ENCODE measurements at regions of chr6 and their contacts with region 1.

Region 1: DNA sequence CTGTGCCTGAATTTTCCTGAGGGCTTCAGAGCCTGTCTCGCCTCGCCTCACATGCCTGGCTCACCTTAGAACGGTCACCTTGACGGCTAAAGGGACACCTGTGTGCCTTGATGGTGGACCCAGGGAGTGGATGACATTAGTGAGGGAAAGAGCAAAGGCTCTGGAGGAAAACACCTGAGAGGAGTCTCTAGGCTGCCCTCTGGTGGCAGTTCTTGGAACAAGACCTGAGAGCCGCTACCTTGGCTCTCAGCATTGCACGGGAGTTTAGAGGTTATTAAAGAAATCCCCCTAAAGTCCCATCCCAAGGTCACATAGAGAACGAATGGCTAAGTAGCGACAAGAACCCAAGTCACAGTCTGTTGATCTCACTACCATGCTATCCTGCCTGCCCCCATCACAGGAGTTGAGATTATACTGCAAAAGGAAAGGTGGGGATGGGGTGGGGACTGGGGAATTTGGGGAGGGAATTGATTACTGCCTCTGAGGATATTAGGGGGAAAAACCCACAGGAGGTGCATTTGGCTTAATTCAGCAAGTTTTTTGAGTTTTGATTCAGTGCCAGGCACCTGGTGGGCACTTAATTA is 7.9 kb upstream of the CDSN start:
- DNase-seq: peak; percentile 88
- ATAC-seq: peak; percentile 75
- H3K4me3 Mint-ChIP-seq: no peak overlapping the region
- H3K27ac Mint-ChIP-seq: peak overlapping the region; percentile 2; the same call in 1 of the 2 replicates
- H3K4me1 Mint-ChIP-seq: peaks cover 42% of the 10 kb centered on the region
- H3K27me3 Mint-ChIP-seq: peaks cover 10% of the 10 kb centered on the region
- CTCF ChIP-seq: peak; percentile 90

Region 2: GRCh38 chr6:31103136-31103535 is 25.0 kb before region 1 on chr6:
- CTCF ChIA-PET with region 1: interaction called, 12 read pairs
- POLR2A ChIA-PET with region 1: no interaction called
- DNase-seq: no peak
- ATAC-seq: no peak
- H3K4me3 Mint-ChIP-seq: no peak overlapping the region
- H3K27ac Mint-ChIP-seq: no peak overlapping the region
- H3K4me1 Mint-ChIP-seq: 0 out of 2 replicates have a peak, but pooled peaks cover 3% of the 10 kb centered on the region
- H3K27me3 Mint-ChIP-seq: no peaks in the 10 kb centered on the region; the same call in 1 of the 2 replicates
- CTCF ChIP-seq: no peak

Region 3: DNA sequence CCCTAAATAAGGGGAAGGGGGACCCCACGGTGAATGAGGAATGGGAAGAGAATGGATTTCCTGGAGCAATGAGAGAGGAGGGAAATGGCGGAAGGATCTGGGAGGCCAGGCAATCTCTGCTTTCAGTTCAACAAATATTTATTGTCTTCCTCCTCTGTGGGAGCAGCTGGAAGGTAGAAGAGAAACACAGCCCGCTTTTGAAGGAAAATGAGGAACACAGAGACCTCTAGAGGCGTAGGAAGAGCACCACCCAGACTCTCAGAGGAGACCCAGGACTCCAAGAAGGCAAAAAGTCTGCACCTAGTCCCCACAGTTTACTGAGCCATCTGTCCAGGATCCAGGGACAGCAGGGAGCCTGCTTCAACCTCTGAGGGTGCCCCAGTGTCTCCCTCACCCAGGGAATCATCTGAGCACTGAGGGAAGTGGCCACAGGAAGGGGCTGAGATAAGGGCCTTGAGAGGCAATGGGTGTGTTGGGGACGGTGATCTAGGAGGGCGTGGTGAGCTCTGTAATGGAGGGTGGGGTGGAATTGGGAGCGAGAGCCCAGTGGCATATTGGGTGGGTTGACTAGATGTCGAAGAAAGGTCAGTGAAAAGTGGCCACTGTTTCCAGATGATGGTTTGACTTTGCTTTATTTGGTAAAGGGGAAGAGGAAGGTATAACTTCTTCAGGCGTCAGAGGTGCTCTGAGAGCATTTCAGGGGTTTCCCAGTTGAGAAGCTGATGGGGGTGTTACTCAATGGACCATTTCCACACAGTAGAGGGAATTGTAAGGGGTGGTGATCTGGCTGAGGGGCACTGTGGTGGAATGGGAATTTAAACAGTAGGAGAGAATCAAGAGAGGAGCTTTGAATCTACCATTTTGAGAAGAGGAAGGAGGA is 13.0 kb before region 1 on chr6:
- CTCF ChIA-PET with region 1: interaction called, 90 read pairs
- POLR2A ChIA-PET with region 1: no interaction called
- DNase-seq: no peak
- ATAC-seq: peak; percentile 70
- H3K4me3 Mint-ChIP-seq: no peak overlapping the region
- H3K27ac Mint-ChIP-seq: no peak overlapping the region
- H3K4me1 Mint-ChIP-seq: peaks cover 30% of the 10 kb centered on the region
- H3K27me3 Mint-ChIP-seq: peaks cover 22% of the 10 kb centered on the region
- CTCF ChIP-seq: no peak

Region 4: GRCh38 chr6:31225735-31226134 is 97.5 kb after region 1 on chr6:
- CTCF ChIA-PET with region 1: no interaction called
- POLR2A ChIA-PET with region 1: no interaction called
- DNase-seq: no peak
- ATAC-seq: no peak
- H3K4me3 Mint-ChIP-seq: no peak overlapping the region
- H3K27ac Mint-ChIP-seq: no peak overlapping the region
- H3K4me1 Mint-ChIP-seq: no peaks in the 10 kb centered on the region
- H3K27me3 Mint-ChIP-seq: peaks cover 9% of the 10 kb centered on the region; the same call in 1 of the 2 replicates
- CTCF ChIP-seq: no peak

Measured in WTC11 (cell line).